Esophagus squamous epithelium (tissue), 5 donors: ENCODE measurements at regions of chr15 and their contacts with region 1.

Region 1: DNA sequence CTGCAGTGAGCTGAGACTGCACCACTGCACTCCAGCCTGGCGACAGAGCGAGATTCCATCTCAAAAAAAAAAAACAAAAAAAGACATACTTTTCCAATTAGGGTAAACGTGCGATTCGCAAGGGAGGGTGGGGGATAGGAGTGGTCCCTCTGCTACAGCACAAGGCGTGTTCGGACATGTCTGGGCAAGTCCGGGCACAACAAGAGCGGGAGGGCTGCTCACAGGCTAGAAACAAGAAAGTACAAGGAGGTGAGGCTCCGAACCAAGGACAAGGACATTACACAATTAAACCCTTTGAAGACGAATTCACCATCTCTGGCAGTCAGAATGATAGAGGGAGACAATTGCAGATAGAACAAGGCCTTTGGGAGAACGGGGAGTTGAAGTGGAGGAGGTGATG is 32.2 kb upstream of the BCL2A1 start:
- DNase-seq: no peak
- H3K4me3 ChIP-seq: no peak overlapping the region
- H3K27ac ChIP-seq: no peak overlapping the region
- H3K4me1 ChIP-seq: no peaks in the 10 kb centered on the region
- H3K27me3 ChIP-seq: no peaks in the 10 kb centered on the region
- CTCF ChIP-seq: no peak
- POLR2A ChIP-seq: no peak

Region 2: DNA sequence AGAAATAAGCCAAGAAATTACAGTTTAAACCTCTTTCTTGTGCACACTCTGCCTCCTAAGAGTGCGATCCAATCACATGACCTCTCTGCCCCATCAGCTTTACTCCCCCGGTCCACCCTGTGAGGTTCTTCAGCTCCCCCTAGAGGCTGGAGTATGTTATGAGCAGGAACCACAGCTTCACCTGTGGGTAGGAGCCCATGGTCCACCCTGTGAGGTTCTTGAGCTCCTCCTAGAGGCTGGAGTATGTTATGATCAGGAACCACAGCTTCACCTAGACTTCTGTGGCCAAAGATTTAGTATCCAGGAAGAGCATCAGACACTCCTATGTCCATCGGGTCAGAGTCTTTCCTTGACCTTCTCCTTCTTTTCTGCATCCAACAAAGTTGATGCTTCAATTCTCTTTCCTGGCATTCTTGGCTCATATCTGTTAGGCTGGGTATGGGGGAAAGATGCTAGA is 407.1 kb before region 1 on chr15:
- intact Hi-C with region 1: loop called (anchors 10 kb)
- DNase-seq: no peak
- H3K4me3 ChIP-seq: no peak overlapping the region
- H3K27ac ChIP-seq: no peak overlapping the region
- H3K4me1 ChIP-seq: no peaks in the 10 kb centered on the region
- H3K27me3 ChIP-seq: peaks cover 0 to 26% (median 0%) of the 10 kb centered on the region in 4 donors
- CTCF ChIP-seq: peak in 5 of 6 experiments; percentile 51 to 92 (median 79)
- POLR2A ChIP-seq: no peak